Natural killer cell (primary cell): ENCODE measurements at regions of chr21 and their contacts with region 1.

Region 1: DNA sequence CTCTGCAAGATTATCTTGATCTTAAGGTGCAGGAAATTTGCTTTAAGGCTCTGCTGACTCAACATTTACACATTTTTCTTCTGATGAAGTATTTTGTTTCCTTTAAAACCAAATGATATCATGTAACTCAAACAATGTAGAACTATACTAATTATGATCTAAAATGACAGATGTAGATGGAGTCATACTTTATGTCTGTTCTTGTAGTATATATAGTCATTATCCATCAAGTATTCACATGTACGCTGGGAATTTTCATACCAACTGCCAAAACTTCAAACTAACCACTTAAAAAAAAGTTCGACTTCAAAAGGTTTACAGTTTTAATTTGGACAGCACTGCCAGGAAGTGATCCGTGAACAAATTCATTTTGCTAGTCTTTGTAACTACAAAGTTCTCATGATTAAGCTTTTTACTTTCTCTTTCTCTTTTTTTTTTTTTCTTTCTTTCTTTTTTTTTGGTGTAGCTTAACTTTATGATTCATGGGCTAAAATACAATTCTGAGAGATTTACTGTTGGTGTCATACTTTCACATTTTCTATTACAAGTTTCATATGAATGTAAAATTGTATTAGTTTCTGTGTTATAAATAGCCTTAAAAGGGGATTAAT is 509.0 kb upstream of the CXADR start:
- DNase-seq: no peak
- ATAC-seq: no peak
- H3K4me3 ChIP-seq: no peak overlapping the region
- H3K4me3 Mint-ChIP-seq: no peak overlapping the region
- H3K27ac ChIP-seq: no peak overlapping the region
- H3K27ac Mint-ChIP-seq: no peak overlapping the region
- H3K4me1 ChIP-seq: no peaks in the 10 kb centered on the region
- H3K4me1 Mint-ChIP-seq: no peaks in the 10 kb centered on the region
- H3K27me3 ChIP-seq: no peaks in the 10 kb centered on the region
- H3K27me3 Mint-ChIP-seq: no peaks in the 10 kb centered on the region
- CTCF ChIP-seq: no peak

Region 2: DNA sequence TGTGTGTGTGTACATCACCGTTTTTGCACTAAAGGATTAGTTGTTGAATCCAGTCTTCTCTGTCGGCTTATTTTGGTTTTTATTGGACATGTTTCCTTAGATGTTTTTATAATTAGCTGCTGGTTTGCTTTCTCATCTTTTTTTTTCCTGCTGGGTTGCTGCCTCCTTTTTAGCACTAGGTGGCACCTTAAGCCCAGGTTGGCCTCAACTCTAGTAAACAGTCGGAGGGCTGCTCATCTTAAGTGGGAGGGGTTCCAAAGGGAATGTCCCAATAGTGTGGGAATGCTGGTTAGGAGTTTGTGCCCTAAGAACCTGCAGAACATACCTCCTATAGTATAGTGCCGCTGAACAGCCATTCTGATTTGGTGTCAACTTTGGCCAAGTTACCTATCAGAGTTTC is 61.2 kb before region 1 on chr21:
- intact Hi-C with region 1: loop called (anchors 10 kb)
- DNase-seq: no peak
- ATAC-seq: no peak
- H3K4me3 ChIP-seq: no peak overlapping the region
- H3K4me3 Mint-ChIP-seq: no peak overlapping the region
- H3K27ac ChIP-seq: no peak overlapping the region
- H3K27ac Mint-ChIP-seq: no peak overlapping the region
- H3K4me1 ChIP-seq: no peaks in the 10 kb centered on the region
- H3K4me1 Mint-ChIP-seq: no peaks in the 10 kb centered on the region
- H3K27me3 ChIP-seq: no peaks in the 10 kb centered on the region
- H3K27me3 Mint-ChIP-seq: no peaks in the 10 kb centered on the region
- CTCF ChIP-seq: no peak